T-cell (primary cell): ENCODE measurements at regions of chr2 and their contacts with region 1.

Region 1: DNA sequence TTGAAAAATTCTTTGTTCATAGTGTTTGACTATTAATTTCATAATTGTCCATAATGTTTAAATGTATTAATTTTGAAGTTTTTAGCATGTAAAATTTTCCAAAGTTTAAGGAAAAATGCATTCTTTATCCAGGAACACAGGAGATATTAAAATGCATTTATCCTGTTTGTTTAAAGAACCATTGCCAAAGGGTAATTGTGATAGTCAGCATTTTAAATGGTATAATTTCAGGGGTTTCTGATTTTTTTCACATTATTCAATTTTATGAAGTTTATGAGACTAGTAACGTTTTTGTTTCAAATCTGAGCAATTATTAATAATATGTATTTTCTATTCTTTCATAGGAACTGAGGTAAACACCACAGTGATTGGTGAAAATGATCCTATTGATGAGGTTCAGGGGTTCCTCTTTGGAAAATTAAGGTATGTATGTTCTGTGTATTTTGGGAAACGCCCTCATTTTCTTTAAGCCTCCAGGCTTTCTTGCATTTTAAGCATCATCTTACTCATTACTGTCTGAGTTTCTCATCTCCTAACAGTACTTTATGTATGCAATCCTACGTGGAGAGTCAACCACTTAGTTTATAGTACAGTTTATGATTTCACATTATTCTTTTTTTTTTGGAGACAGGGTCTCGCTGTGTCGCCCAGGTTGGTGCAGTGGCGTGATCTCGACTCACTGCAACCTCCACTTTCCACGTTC is 25.1 kb downstream of the UGGT1 start:
- DNase-seq: no peak
- ATAC-seq: no peak
- H3K4me3 ChIP-seq: no peak overlapping the region
- H3K4me3 Mint-ChIP-seq: no peak overlapping the region
- H3K27ac ChIP-seq: no peak overlapping the region
- H3K27ac Mint-ChIP-seq: no peak overlapping the region
- H3K4me1 ChIP-seq: no peaks in the 10 kb centered on the region
- H3K4me1 Mint-ChIP-seq: no peaks in the 10 kb centered on the region
- H3K27me3 ChIP-seq: no peaks in the 10 kb centered on the region
- H3K27me3 Mint-ChIP-seq: no peaks in the 10 kb centered on the region

Region 2: GRCh38 chr2:128090945-128091725 is 24.9 kb before region 1 on chr2 and contains the start of gene UGGT1:
- CTCF ChIA-PET with region 1: no interaction called
- POLR2A ChIA-PET with region 1: interaction called in 1 of 2 experiments, 10 read pairs
- DNase-seq: peak; percentile 83 to 97 (median 91)
- ATAC-seq: peak; percentile 96 to 98 (median 98)
- H3K4me3 ChIP-seq: peak within 1 kb of the TSS; percentile 76 to 88
- H3K4me3 Mint-ChIP-seq: peak within 1 kb of the TSS; percentile 88 to 96 (median 92)
- H3K27ac ChIP-seq: peak within 1 kb of the TSS; percentile 78
- H3K27ac Mint-ChIP-seq: peak within 1 kb of the TSS; percentile 92 to 96
- H3K4me1 ChIP-seq: peaks cover 12 to 18% of the 10 kb centered on the region in 2 experiments
- H3K4me1 Mint-ChIP-seq: peaks cover 46 to 54% (median 48%) of the 10 kb centered on the region in 3 donors
- H3K27me3 ChIP-seq: no peaks in the 10 kb centered on the region
- H3K27me3 Mint-ChIP-seq: no peaks in the 10 kb centered on the region
- total RNA-seq, gene UGGT1: 46.0 to 50.8 (median 48.4) TPM

Region 3: DNA sequence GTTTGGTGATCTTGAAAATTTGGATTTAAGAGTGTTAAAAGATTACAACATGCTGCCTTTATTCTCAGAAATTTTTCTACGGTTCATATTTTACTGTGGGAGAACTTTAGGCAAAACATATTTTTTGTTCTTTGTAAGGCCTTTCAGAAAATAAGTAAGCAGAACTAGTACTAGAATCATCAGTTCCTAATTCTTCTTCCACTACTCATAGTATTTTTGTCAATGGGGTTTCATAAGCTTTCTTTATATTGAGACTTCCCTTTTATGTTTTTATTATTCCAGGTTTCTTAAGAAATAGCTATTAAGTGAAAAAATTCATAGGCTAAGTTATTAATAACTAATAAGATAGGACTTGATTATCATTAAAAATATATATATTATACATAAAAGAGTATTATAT is 12.7 kb before region 1 on chr2:
- CTCF ChIA-PET with region 1: no interaction called
- POLR2A ChIA-PET with region 1: interaction called in 1 of 2 experiments, 14 read pairs
- DNase-seq: no peak
- ATAC-seq: no peak
- H3K4me3 ChIP-seq: no peak overlapping the region
- H3K4me3 Mint-ChIP-seq: no peak overlapping the region
- H3K27ac ChIP-seq: no peak overlapping the region
- H3K27ac Mint-ChIP-seq: no peak overlapping the region
- H3K4me1 ChIP-seq: no peaks in the 10 kb centered on the region
- H3K4me1 Mint-ChIP-seq: peaks cover 13 to 25% (median 15%) of the 10 kb centered on the region in 3 donors
- H3K27me3 ChIP-seq: no peaks in the 10 kb centered on the region
- H3K27me3 Mint-ChIP-seq: no peaks in the 10 kb centered on the region

Region 4: DNA sequence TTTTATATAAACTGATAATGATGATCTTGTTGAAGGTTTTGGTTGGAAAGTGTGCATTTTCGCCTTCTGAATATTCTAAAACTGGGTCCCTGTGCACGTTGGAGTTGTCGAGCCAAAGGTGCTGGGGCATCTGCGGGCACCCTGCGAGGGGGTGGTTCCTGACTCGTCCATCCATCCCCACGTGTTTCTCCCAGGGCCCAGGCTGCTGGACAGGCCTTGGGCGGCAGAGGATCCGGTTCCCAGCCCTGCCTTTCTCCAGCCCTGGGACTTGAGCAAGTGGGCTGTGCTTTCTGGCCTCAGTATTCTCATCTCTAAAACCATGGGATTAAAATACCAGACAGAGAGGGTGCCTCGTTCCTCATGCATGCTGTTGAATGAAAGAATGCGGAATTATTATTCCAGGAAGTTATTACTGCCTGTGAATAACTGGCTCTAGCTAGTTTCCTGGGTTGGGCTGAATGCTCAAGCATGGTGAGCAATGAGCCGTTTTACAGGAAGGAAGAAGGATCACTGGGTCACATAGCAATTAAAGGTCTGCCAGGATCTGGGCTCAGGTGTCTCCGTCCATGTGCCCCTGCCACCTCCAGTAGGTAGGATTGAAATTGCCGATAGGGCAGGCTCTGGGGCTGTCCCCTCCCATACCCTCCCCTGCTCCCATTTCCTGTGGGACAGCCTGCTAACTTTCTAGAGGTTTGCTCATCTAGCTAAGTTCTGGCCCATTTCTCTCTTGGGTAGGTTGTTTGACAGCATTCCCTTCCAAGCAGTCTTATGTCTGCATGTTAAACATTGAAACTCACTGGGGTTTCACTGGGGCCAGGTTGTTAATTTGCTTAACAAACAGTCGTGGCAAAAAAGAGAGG is 279.8 kb after region 1 on chr2:
- CTCF ChIA-PET with region 1: no interaction called
- POLR2A ChIA-PET with region 1: no interaction called
- DNase-seq: peak in 1 of 35 experiments; percentile 3
- ATAC-seq: no peak
- H3K4me3 ChIP-seq: no peak overlapping the region
- H3K4me3 Mint-ChIP-seq: no peak overlapping the region
- H3K27ac ChIP-seq: no peak overlapping the region
- H3K27ac Mint-ChIP-seq: no peak overlapping the region
- H3K4me1 ChIP-seq: no peaks in the 10 kb centered on the region
- H3K4me1 Mint-ChIP-seq: peaks cover 0 to 4% (median 0%) of the 10 kb centered on the region in 3 donors
- H3K27me3 ChIP-seq: peaks cover 0 to 6% of the 10 kb centered on the region in 2 experiments
- H3K27me3 Mint-ChIP-seq: peaks cover 3 to 7% of the 10 kb centered on the region in 2 donors